Calu3 (cell line): ENCODE measurements at regions of chr19 and their contacts with region 1.

Region 1: DNA sequence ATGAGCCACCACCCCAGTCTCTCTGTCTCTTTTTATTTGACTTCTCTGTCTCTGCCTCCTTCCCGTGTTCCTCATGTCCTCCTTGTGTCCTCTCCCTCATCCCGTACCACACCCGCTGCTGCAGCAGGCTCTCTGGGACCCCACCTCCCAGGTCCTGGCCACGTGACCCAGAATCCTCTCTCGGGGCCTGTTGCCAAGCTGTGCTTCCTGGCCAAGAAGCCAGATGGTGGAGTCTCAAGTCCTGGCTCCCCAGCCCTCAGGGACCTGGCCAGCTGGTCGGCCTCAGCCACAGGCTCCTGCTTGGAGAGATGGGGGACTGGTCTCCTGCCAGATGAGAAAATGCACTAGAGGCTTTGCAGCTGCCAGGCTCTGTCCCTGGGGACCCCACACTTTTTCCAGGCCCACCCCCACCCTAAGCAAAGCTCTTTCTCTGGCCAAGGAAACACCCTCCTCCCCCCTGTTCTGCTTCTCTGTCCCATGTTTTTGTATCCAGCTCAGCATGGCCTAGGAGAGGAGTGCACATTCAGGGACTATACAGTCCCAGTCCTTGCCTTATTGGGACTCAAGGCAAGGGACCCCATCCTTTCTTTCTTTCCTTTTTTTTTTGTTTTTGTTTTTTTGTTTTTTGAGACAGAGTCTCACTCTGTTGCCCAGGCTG is 34.3 kb upstream of the SHKBP1 start:
- DNase-seq: no peak
- H3K4me3 Mint-ChIP-seq: no peak overlapping the region
- H3K27ac Mint-ChIP-seq: no peak overlapping the region
- H3K4me1 Mint-ChIP-seq: peaks cover 7% of the 10 kb centered on the region
- H3K27me3 Mint-ChIP-seq: peaks cover 20% of the 10 kb centered on the region
- CTCF ChIP-seq: no peak

Region 2: GRCh38 chr19:40331069-40331468 is 211.3 kb before region 1 on chr19:
- CTCF ChIA-PET with region 1: no interaction called
- intact Hi-C with region 1: no loop called
- DNase-seq: no peak
- H3K4me3 Mint-ChIP-seq: no peak overlapping the region
- H3K27ac Mint-ChIP-seq: no peak overlapping the region
- H3K4me1 Mint-ChIP-seq: no peaks in the 10 kb centered on the region
- H3K27me3 Mint-ChIP-seq: no peaks in the 10 kb centered on the region
- CTCF ChIP-seq: no peak

Region 3: GRCh38 chr19:40512473-40513344 is 29.6 kb before region 1 on chr19:
- CTCF ChIA-PET with region 1: no interaction called
- intact Hi-C with region 1: no loop called
- DNase-seq: no peak
- H3K4me3 Mint-ChIP-seq: no peak overlapping the region
- H3K27ac Mint-ChIP-seq: no peak overlapping the region
- H3K4me1 Mint-ChIP-seq: no peaks in the 10 kb centered on the region
- H3K27me3 Mint-ChIP-seq: peaks cover 67% of the 10 kb centered on the region
- CTCF ChIP-seq: no peak

Region 4: DNA sequence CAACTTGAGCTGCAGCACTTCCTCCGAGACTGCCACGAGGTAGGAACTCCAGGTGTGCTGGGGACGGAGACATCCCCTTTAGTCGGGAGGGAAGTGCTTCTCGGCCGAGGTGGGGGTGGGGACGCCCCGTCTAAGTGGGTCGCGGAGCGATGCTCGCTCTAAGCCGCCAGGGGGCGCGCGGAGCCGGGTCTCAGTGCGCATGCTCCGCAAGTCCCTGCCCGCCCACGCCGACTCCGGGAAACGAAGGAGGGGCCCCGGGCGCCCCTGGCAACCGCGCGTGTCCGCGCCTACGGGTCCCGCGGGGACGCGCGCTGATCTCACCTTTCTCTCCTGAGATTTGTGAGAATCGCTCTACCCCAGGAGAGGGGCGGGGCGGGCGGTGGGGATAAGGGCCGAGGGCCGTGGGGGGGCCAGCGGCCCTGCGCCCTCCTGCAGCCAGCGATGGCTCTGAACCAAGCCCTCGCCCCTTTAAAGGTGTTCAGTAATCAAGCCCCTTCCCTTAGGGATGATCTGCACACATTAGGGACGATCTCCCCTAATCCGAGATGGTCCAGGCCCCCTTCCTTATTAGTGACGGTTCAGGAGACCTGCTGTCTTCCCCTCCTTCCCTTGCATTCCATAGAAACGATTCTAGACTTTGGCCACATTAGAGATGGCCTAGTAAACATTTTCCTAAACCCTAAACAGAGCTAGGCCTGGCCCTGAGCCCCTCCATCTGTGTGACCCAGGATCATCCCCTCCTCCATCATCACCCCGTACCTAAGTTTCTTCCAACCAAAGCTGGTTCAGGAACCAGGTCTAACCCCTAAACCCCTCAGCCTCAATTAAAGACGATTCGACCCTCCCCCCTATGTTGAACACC is 13.0 kb before region 1 on chr19:
- CTCF ChIA-PET with region 1: interaction called, 10 read pairs
- intact Hi-C with region 1: no loop called
- DNase-seq: peak; percentile 93
- H3K4me3 Mint-ChIP-seq: peak overlapping the region; percentile 57
- H3K27ac Mint-ChIP-seq: no peak overlapping the region
- H3K4me1 Mint-ChIP-seq: peaks cover 17% of the 10 kb centered on the region
- H3K27me3 Mint-ChIP-seq: peaks cover 78% of the 10 kb centered on the region
- CTCF ChIP-seq: peak; percentile 96

Region 5: GRCh38 chr19:40603389-40604135 is 61.2 kb after region 1 on chr19:
- CTCF ChIA-PET with region 1: interaction called, 11 read pairs
- intact Hi-C with region 1: loop called (anchors 5 kb)
- DNase-seq: peak; percentile 99
- H3K4me3 Mint-ChIP-seq: peak overlapping the region; percentile 69
- H3K27ac Mint-ChIP-seq: peak overlapping the region; percentile 62
- H3K4me1 Mint-ChIP-seq: peaks cover 77% of the 10 kb centered on the region
- H3K27me3 Mint-ChIP-seq: peaks cover 60% of the 10 kb centered on the region
- CTCF ChIP-seq: no peak